AG04450 (cell line): ENCODE measurements at regions of chr11 and their contacts with region 1.

Region 1: GRCh38 chr11:122153746-122154145 is 37.7 kb upstream of the BLID start:
- DNase-seq: no peak
- H3K4me3 ChIP-seq: no peak overlapping the region
- H3K27ac ChIP-seq: peak overlapping the region; percentile 39
- H3K27me3 ChIP-seq: no peaks in the 10 kb centered on the region
- CTCF ChIP-seq: no peak

Region 2: DNA sequence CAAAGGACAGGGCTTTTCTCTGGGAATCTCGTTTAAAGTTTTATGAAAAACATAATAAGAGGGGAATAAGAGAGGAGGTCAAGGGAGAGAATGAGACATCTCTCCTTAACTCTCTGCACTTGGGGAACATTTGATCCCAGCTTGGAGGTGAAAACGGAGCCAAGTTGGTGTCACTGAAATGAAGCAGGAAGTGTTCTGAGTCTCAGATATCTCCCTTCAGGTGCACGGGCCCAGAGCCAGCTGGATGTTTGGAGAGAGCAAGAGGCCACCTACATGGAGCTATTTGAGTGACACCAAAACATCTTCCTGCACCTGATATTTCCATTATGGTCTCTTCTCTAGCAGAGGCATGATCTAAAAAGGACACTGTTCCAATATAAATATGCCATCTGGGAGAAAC is 123.5 kb before region 1 on chr11:
- CTCF ChIA-PET with region 1: no interaction called
- POLR2A ChIA-PET with region 1: interaction called, 10 read pairs
- DNase-seq: no peak
- H3K4me3 ChIP-seq: no peak overlapping the region
- H3K27ac ChIP-seq: no peak overlapping the region
- H3K27me3 ChIP-seq: no peaks in the 10 kb centered on the region
- CTCF ChIP-seq: no peak